ENCODE measurements at regions of chr7 and their contacts with region 1.

Region 1: DNA sequence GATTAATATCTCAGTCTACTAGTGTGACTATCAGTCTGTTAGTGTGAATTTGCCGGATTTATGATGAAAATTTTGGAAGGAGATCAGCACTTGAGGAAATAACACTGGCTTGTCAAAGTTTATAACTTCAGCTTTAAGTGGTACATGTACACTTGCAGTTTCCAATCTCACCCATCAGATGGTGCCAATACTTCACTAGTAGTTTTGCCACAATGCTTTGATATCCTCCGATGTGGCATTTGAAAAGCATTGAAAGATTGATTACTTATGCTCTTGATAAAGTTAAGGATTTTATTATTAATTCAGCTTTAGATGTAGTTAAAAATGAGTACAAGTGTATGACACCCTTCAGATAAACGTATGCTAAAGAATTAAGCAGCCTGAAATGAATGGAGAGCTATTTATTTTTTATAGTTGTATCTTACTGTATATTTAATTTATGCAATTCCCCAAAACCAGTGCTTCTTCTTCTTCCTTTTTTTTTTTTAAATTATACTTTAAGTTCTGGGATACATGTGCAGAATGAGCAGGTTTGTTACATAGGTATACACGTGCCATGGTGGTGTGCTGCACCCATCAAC is 98.2 kb downstream of the ANLN start:
- DNase-seq: peak; percentile 85
- H3K4me3 Mint-ChIP-seq: no peak overlapping the region
- H3K27ac Mint-ChIP-seq: no peak overlapping the region
- H3K4me1 Mint-ChIP-seq: peaks cover 4% of the 10 kb centered on the region
- H3K27me3 Mint-ChIP-seq: peaks cover 12% of the 10 kb centered on the region

Region 2: GRCh38 chr7:36562121-36562520 is 74.3 kb after region 1 on chr7:
- intact Hi-C with region 1: no loop called
- DNase-seq: no peak
- H3K4me3 Mint-ChIP-seq: no peak overlapping the region
- H3K27ac Mint-ChIP-seq: peak overlapping the region; percentile 57
- H3K4me1 Mint-ChIP-seq: peaks cover 8% of the 10 kb centered on the region
- H3K27me3 Mint-ChIP-seq: no peaks in the 10 kb centered on the region

Region 3: DNA sequence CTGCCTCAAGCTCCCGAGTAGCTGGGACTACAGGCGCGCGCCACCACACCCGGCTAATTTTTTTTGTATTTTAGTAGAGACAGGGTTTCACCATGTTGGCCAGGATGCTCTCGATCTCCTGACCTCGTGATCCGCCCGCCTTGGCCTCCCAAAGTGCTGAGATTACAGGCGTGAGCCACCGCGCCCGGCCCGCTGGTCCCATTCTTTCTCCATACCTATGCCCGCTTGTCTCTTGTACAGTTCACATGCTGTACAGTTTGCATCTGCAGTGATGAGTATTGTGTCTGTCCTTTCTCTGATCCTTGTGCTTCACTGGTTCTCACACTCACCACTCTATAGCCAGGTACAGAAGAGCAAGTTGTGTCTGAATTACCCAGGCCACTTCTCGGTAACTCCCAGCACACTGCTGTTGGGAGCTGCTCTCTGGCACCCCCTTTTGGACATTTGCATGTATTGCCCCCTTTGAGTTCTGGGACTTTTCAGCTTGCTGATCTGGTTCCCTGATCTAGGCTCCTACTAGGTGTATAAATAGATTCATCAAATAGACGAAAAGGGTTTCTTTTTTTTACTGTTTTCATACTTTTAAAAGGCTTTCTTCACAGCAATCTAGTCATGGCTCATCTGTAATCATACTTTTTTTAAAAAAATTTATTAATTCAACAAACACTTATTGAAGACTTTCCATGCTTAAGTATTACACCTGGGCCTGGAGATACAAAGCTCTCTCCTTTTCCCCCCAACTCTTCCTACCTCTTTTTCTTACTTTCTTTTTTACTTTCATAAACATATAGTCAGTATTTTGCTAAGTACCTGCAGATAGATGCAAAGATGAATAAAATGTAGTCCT is 183.0 kb after region 1 on chr7:
- intact Hi-C with region 1: loop called (anchors 1 kb)
- DNase-seq: peak; percentile 91
- H3K4me3 Mint-ChIP-seq: peak overlapping the region; percentile 4
- H3K27ac Mint-ChIP-seq: peak overlapping the region; percentile 42
- H3K4me1 Mint-ChIP-seq: peaks cover 34% of the 10 kb centered on the region
- H3K27me3 Mint-ChIP-seq: no peaks in the 10 kb centered on the region

Region 4: GRCh38 chr7:36986429-36987362 is 498.9 kb after region 1 on chr7:
- intact Hi-C with region 1: loop called (anchors 5 kb)
- DNase-seq: peak; percentile 85
- H3K4me3 Mint-ChIP-seq: no peak overlapping the region
- H3K27ac Mint-ChIP-seq: no peak overlapping the region
- H3K4me1 Mint-ChIP-seq: peaks cover 14% of the 10 kb centered on the region
- H3K27me3 Mint-ChIP-seq: no peaks in the 10 kb centered on the region